ENCODE measurements at regions of chrX and their contacts with region 1.

Region 1: GRCh38 chrX:118345401-118346257 is at the start of gene WDR44:
- DNase-seq: peak; percentile 98
- H3K4me3 ChIP-seq: peak within 1 kb of the TSS; percentile 53 to 75 (median 69)
- H3K27ac ChIP-seq: peak within 1 kb of the TSS; percentile 92 to 95 (median 92)
- H3K4me1 ChIP-seq: peaks cover 0 to 17% (median 11%) of the 10 kb centered on the region in 4 donors
- H3K27me3 ChIP-seq: no peaks in the 10 kb centered on the region
- CTCF ChIP-seq: no peak
- EP300 ChIP-seq: peak in 1 of 4 donors; percentile 19
- POLR2A ChIP-seq: peak; percentile 40
- total RNA-seq, gene WDR44: 17.0 to 23.2 (median 20.2) TPM

Region 2: DNA sequence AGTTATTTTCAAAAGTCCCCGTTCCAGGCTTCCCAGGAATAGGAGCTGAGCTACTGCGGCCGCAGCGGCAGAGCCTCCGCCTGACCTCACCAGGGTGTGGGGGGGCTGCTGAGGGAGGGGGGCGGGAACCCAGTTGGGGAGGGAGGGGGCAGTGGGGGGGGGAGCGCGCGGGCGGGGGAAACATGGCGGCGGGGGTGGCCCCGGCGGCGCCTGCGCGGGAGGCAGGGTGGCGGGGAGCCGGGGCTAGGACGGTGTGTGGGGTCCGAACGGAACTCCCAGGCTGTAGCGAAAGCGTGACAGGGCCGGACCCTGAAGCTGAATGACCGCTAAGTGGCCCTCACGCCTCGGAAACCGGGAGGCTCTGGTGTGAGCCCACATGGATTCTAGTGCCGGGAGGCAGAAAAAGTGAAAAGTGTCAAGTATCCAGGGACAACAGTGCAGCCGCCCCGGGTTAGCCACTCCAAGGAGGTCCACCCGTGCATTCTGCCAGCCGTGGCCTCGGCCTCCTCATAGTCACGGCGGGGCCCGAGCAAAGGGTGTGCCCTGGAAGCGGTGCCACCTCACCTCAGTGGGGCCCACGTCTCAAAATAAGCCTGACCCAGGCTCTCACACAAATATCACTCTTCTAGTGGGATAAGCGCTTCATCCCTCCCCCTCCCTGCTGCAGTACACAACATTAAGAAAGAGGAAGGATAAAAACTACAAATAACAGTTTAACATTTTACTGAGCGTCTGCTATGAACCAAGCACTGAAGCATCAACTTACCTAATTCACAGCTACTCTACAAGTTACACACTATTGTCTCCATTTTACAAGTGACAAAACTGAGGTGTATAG is 228.7 kb before region 1 on chrX and contains the start of gene KLHL13:
- intact Hi-C with region 1: loop called (anchors 10 kb)
- DNase-seq: peak; percentile 76
- H3K4me3 ChIP-seq: peak within 1 kb of the TSS; percentile 55 to 71 (median 67)
- H3K27ac ChIP-seq: peak within 1 kb of the TSS; percentile 77 to 82 (median 80)
- H3K4me1 ChIP-seq: peaks cover 0 to 5% (median 2%) of the 10 kb centered on the region in 4 donors
- H3K27me3 ChIP-seq: no peaks in the 10 kb centered on the region
- CTCF ChIP-seq: no peak
- EP300 ChIP-seq: no peak
- POLR2A ChIP-seq: no peak
- total RNA-seq, gene KLHL13: 8.9 to 12.9 (median 11.7) TPM

Region 3: DNA sequence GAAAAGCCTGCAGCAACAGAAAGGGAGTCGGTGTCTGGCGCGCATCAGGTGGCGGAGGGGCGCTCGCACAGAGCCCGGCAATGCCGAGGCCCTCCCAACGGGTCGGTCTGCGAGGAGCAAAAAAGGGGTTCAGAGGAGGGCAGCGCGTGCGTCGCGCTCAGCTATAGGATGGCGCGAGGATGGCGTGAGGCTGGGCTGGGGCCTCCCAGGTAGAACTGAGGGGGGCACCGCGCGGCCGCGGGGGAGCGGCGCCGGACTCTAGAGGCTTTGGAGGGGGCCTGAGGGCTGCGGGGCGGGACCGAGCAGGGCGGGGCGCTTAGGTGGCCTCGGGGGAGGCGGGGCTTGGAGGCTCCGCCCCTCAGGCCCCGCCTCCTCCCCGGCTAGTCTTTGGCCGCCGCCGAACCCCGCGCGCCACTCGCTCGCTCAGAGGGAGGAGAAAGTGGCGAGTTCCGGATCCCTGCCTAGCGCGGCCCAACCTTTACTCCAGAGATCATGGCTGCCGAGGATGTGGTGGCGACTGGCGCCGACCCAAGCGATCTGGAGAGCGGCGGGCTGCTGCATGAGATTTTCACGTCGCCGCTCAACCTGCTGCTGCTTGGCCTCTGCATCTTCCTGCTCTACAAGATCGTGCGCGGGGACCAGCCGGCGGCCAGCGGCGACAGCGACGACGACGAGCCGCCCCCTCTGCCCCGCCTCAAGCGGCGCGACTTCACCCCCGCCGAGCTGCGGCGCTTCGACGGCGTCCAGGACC is 890.4 kb after region 1 on chrX and contains the start of gene PGRMC1:
- intact Hi-C with region 1: loop called (anchors 10 kb)
- DNase-seq: peak; percentile 91
- H3K4me3 ChIP-seq: peak within 1 kb of the TSS; percentile 66 to 81 (median 72)
- H3K27ac ChIP-seq: peak within 1 kb of the TSS; percentile 81 to 90 (median 88)
- H3K4me1 ChIP-seq: peaks cover 0 to 14% (median 5%) of the 10 kb centered on the region in 4 donors
- H3K27me3 ChIP-seq: no peaks in the 10 kb centered on the region
- CTCF ChIP-seq: no peak
- EP300 ChIP-seq: no peak
- POLR2A ChIP-seq: peak; percentile 71 to 75
- total RNA-seq, gene PGRMC1: 104 to 159 (median 132) TPM

Region 4: GRCh38 chrX:119303137-119303536 is 957.5 kb after region 1 on chrX:
- intact Hi-C with region 1: no loop called
- DNase-seq: no peak
- H3K4me3 ChIP-seq: no peak overlapping the region
- H3K27ac ChIP-seq: no peak overlapping the region
- H3K4me1 ChIP-seq: no peaks in the 10 kb centered on the region
- H3K27me3 ChIP-seq: no peaks in the 10 kb centered on the region
- CTCF ChIP-seq: no peak
- EP300 ChIP-seq: no peak
- POLR2A ChIP-seq: no peak

Measured in sigmoid colon (tissue), 7 donors.